Endothelial cell of umbilical vein (primary cell): ENCODE measurements at regions of chr10 and their contacts with region 1.

Region 1: GRCh38 chr10:88990384-88991160 is at the start of gene FAS:
- DNase-seq: peak; percentile 53
- H3K4me3 ChIP-seq: peak within 1 kb of the TSS; percentile 76 to 84 (median 84)
- H3K27ac ChIP-seq: peak within 1 kb of the TSS; percentile 6
- H3K4me1 ChIP-seq: peaks cover 12% of the 10 kb centered on the region
- H3K27me3 ChIP-seq: peaks cover 11 to 22% of the 10 kb centered on the region in 2 experiments
- CTCF ChIP-seq: no peak
- POLR2A ChIP-seq: no peak
- total RNA-seq, gene FAS: 6.0 and 6.1 TPM in 2 replicates

Region 2: DNA sequence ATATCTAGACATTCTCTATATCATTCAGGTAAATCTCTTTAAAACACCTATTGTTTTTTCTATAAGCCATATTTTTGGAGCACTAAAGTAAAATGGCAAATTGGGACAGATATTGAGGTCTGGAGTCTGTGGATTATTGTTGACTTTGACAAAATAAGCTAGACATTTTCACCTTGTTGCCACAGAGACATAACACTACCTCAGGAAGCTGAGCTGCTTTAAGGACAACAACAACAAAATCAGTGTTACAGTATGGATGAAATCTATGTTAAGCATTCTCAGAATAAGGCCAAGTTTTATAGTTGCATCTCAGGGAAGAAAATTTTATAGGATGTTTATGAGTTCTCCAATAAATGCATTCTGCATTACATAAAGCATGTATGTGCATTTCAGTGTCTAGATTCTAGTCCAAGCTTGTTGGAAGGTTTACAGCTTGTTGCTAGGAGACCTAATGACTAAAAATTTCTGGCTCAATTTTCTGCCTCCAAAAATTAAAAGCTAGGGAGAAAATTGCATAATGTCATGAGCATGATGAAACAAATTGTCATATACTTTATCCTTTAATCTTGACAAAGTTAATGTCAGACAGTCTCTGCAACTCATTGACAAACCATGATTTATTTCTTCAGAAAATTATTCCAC is 169.7 kb before region 1 on chr10:
- CTCF ChIA-PET with region 1: no interaction called
- POLR2A ChIA-PET with region 1: no interaction called
- dilution Hi-C with region 1: no loop called
- intact Hi-C with region 1: no loop called
- DNase-seq: no peak
- H3K4me3 ChIP-seq: no peak overlapping the region
- H3K27ac ChIP-seq: no peak overlapping the region
- H3K4me1 ChIP-seq: no peaks in the 10 kb centered on the region
- H3K27me3 ChIP-seq: peaks cover 0 to 5% of the 10 kb centered on the region in 2 experiments
- CTCF ChIP-seq: no peak
- POLR2A ChIP-seq: no peak

Region 3: GRCh38 chr10:88880282-88881076 is 110.1 kb before region 1 on chr10:
- CTCF ChIA-PET with region 1: interaction called, 5 read pairs
- POLR2A ChIA-PET with region 1: no interaction called
- dilution Hi-C with region 1: no loop called
- intact Hi-C with region 1: loop called (anchors 1 kb)
- DNase-seq: peak; percentile 82
- H3K4me3 ChIP-seq: peak overlapping the region; percentile 30 to 55 (median 55)
- H3K27ac ChIP-seq: peak overlapping the region; percentile 84
- H3K4me1 ChIP-seq: peaks cover 30% of the 10 kb centered on the region
- H3K27me3 ChIP-seq: no peaks in the 10 kb centered on the region
- CTCF ChIP-seq: peak; percentile 5 to 28
- POLR2A ChIP-seq: peak; percentile 83

Region 4: DNA sequence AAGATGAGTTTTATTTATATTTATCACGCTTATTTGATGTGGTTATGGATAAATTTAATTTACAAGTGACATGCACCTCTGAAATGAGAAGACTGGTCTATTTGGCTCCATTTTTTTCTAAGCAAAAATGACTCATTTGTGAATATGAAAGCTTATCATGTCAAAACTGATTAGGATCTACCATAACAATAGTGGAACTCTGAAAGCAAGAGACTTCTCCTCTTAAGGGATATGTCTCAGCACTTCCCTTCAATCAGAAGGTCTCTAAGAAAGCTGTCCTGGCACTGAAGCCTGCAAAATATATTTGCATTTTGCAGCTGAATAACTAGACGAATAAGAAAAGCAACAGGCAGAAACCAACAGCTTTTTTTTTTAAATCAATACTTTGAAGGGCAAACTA is 12.8 kb after region 1 on chr10:
- CTCF ChIA-PET with region 1: interaction called, 11 read pairs
- POLR2A ChIA-PET with region 1: interaction called, 3 read pairs
- dilution Hi-C with region 1: no loop called
- intact Hi-C with region 1: loop called (anchors 1 kb)
- DNase-seq: peak; percentile 74
- H3K4me3 ChIP-seq: no peak overlapping the region
- H3K27ac ChIP-seq: no peak overlapping the region
- H3K4me1 ChIP-seq: peaks cover 14% of the 10 kb centered on the region
- H3K27me3 ChIP-seq: peaks cover 0 to 5% of the 10 kb centered on the region in 2 experiments
- CTCF ChIP-seq: no peak
- POLR2A ChIP-seq: no peak

Region 5: DNA sequence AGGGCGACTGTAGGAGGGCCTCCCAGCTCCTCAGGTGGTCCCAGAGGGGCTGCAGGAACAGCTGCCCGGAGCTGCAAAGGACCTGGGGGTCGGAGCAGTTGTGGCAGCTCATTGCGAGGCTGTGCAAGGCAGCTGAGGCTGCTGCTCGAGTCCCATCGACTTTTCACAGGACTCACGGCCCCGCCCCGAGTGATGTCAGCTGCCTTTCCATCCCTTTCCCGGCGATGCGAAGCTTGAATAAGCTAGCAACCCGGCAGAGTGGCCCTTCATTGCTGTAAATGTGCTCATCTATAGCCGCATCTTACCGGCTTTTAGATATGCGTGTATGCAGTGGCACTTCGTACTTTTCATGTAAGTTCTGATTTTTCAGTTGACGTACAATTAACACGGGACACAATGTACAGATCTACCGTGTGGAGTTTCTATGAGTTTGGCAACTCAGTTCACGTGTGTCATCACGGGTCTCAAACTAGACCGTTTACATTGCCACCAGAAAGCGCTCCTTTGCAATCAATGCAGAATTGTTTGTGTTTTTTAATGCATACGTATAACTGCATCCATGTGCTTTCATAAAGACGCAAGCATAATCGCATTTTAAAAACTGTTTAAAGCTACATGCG is 216.7 kb after region 1 on chr10 and contains the start of gene CH25H:
- CTCF ChIA-PET with region 1: interaction called, 8 read pairs
- POLR2A ChIA-PET with region 1: no interaction called
- dilution Hi-C with region 1: loop called (anchors 25 kb)
- intact Hi-C with region 1: loop called (anchors 2 kb)
- DNase-seq: peak; percentile 76
- H3K4me3 ChIP-seq: peak within 1 kb of the TSS; percentile 34 to 84 (median 49)
- H3K27ac ChIP-seq: peak within 1 kb of the TSS; percentile 7
- H3K4me1 ChIP-seq: peaks cover 23% of the 10 kb centered on the region
- H3K27me3 ChIP-seq: peaks cover 16 to 27% of the 10 kb centered on the region in 2 experiments
- CTCF ChIP-seq: no peak
- POLR2A ChIP-seq: no peak
- total RNA-seq, gene CH25H: 0.32 TPM in 1 of 2 replicates, not detected in the other